Caco-2 (cell line): ENCODE measurements at regions of chr14 and their contacts with region 1.

Region 1: DNA sequence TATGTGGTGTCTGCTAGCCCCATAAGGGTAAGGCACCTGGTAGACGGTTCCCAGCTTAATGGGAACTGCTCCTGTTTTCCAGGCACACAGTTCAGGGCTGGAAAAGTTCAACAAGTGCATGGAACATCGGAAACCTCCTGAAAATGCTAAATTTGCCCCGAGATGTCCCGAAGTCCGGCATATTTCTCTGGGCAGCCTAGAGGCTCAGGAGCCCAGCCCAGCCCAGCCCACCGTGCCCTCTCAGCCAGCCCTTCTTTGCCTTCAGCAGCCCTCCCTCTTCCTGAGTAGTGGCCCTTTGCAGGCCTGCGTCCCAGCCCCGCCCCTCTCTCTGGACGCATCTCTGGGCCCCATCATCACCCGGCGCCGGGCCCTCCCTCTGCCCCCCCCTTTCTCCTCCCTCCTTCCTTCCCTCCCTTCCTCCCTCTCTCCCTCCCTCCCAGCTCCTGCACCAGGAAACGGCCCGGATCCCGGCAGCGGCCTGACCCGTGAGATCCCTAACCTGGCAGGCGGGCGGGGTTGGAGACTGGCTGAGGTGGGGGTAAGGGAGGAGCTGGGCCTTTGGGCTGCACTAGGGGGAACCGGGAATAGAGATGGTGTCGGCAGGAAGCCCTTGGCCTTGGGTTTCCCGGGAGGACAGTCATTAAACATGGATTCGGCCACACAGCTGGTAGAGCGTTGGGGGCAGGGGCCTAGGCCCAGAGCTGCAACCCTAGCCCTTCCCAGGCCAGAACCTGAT is at the start of gene BCL2L2:
- DNase-seq: peak; percentile 91 to 94
- H3K4me3 ChIP-seq: peak within 1 kb of the TSS; percentile 68
- H3K4me3 Mint-ChIP-seq: peak within 1 kb of the TSS; percentile 75
- H3K27ac Mint-ChIP-seq: peak within 1 kb of the TSS; percentile 78
- H3K4me1 ChIP-seq: peaks cover 15% of the 10 kb centered on the region; the same call in 1 of the 2 replicates
- H3K4me1 Mint-ChIP-seq: peaks cover 14% of the 10 kb centered on the region
- H3K27me3 ChIP-seq: no peaks in the 10 kb centered on the region
- H3K27me3 Mint-ChIP-seq: no peaks in the 10 kb centered on the region
- CTCF ChIP-seq: no peak
- total RNA-seq, gene BCL2L2: 19.1 and 20.8 TPM in 2 replicates

Region 2: GRCh38 chr14:23167116-23167847 is 139.3 kb before region 1 on chr14:
- CTCF ChIA-PET with region 1: no interaction called
- POLR2A ChIA-PET with region 1: interaction called, 11 read pairs
- intact Hi-C with region 1: no loop called
- DNase-seq: no peak
- H3K4me3 ChIP-seq: no peak overlapping the region
- H3K4me3 Mint-ChIP-seq: no peak overlapping the region
- H3K27ac Mint-ChIP-seq: no peak overlapping the region
- H3K4me1 ChIP-seq: peaks cover 38% of the 10 kb centered on the region
- H3K4me1 Mint-ChIP-seq: peaks cover 37% of the 10 kb centered on the region
- H3K27me3 ChIP-seq: no peaks in the 10 kb centered on the region
- H3K27me3 Mint-ChIP-seq: no peaks in the 10 kb centered on the region
- CTCF ChIP-seq: no peak

Region 3: GRCh38 chr14:23209651-23210423 is 96.7 kb before region 1 on chr14:
- CTCF ChIA-PET with region 1: no interaction called
- POLR2A ChIA-PET with region 1: no interaction called
- intact Hi-C with region 1: no loop called
- DNase-seq: no peak
- H3K4me3 ChIP-seq: no peak overlapping the region
- H3K4me3 Mint-ChIP-seq: no peak overlapping the region
- H3K27ac Mint-ChIP-seq: no peak overlapping the region
- H3K4me1 ChIP-seq: no peaks in the 10 kb centered on the region
- H3K4me1 Mint-ChIP-seq: no peaks in the 10 kb centered on the region
- H3K27me3 ChIP-seq: no peaks in the 10 kb centered on the region
- H3K27me3 Mint-ChIP-seq: no peaks in the 10 kb centered on the region
- CTCF ChIP-seq: no peak

Region 4: GRCh38 chr14:23277189-23277588 is 29.4 kb before region 1 on chr14:
- CTCF ChIA-PET with region 1: no interaction called
- POLR2A ChIA-PET with region 1: interaction called, 10 read pairs
- intact Hi-C with region 1: no loop called
- DNase-seq: no peak
- H3K4me3 ChIP-seq: no peak overlapping the region
- H3K4me3 Mint-ChIP-seq: no peak overlapping the region
- H3K27ac Mint-ChIP-seq: no peak overlapping the region
- H3K4me1 ChIP-seq: no peaks in the 10 kb centered on the region
- H3K4me1 Mint-ChIP-seq: no peaks in the 10 kb centered on the region
- H3K27me3 ChIP-seq: no peaks in the 10 kb centered on the region
- H3K27me3 Mint-ChIP-seq: no peaks in the 10 kb centered on the region
- CTCF ChIP-seq: no peak